Activated CD4-positive, alpha-beta T cell treated with anti-CD3 and anti-CD28 coated beads for 36 hours (primary cell): ENCODE measurements at regions of chr2 and their contacts with region 1.

Region 1: GRCh38 chr2:85538486-85539360 is at the start of gene MAT2A:
- DNase-seq: peak; percentile 93
- ATAC-seq: peak; percentile 79
- H3K4me3 Mint-ChIP-seq: peak within 1 kb of the TSS; percentile 95
- H3K27ac Mint-ChIP-seq: peak within 1 kb of the TSS; percentile 99
- H3K4me1 Mint-ChIP-seq: peaks cover 43% of the 10 kb centered on the region
- H3K27me3 Mint-ChIP-seq: no peaks in the 10 kb centered on the region
- total RNA-seq, gene MAT2A: 226 to 259 TPM

Region 2: DNA sequence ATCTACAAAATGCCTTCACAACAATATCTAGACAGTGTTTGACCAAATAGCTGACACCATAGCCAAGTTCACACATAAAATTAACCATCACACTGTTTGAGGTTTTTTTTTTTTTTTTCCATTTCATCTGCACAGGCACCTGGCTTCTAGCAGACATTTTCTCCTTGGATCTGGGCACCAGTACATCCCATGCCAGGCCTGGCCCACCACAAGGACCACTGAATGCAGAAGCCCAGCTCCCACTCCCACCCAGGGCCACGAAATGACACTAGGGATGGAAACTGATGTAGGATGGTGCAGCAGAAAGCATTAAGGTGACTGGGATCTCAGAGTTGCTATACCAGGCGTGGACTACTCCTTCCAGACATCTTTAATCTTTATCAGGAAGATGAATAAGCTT is 620.3 kb before region 1 on chr2:
- CTCF ChIA-PET with region 1: no interaction called
- POLR2A ChIA-PET with region 1: no interaction called
- intact Hi-C with region 1: no loop called
- DNase-seq: no peak
- ATAC-seq: no peak
- H3K4me3 Mint-ChIP-seq: no peak overlapping the region
- H3K27ac Mint-ChIP-seq: peak overlapping the region; percentile 56
- H3K4me1 Mint-ChIP-seq: peaks cover 31% of the 10 kb centered on the region
- H3K27me3 Mint-ChIP-seq: no peaks in the 10 kb centered on the region

Region 3: DNA sequence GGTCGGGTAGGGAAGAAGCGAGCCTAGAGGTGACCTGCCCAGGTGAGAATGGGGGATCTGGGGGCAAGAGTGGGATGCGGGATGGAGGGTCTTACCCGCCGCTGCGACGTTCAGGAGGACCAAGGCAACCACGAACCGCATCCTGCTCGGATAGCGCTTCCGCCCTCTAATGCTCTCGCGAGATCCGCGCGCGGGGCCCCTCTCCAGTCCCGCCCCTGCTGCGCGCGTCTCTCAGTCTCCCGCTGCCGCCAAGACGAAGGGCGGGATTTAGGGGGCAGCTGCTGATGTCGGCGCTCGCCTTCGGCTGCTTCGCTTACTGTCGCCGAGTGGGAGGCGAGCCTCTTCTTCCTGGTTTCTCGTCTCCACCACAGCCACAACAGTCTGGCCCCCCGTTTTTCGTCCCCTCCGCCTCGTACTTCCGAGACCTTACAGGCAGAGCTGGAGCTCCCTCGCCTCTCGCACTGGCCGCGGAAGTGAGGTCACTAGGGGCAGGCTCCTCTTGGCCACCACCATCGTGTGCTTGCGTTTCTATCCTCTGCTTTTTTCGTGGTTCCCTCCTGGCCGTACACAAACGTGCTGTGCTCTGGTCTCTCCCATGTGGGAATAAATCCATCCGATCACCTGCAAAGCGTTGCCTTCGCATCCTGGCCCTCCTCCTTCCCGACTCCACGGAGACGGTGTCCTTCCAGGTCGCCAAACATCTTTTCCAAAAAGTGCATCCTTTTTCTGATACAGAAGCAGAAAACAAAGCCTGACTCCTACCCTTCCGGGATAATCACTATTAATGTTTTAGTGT is 210.7 kb before region 1 on chr2 and contains the start of gene TGOLN2:
- CTCF ChIA-PET with region 1: interaction called, 4 read pairs
- POLR2A ChIA-PET with region 1: interaction called, 12 read pairs
- intact Hi-C with region 1: loop called (anchors 1 to 5 kb)
- DNase-seq: peak; percentile 98
- ATAC-seq: peak; percentile 91
- H3K4me3 Mint-ChIP-seq: peak within 1 kb of the TSS; percentile 86
- H3K27ac Mint-ChIP-seq: peak within 1 kb of the TSS; percentile 99
- H3K4me1 Mint-ChIP-seq: peaks cover 37% of the 10 kb centered on the region
- H3K27me3 Mint-ChIP-seq: no peaks in the 10 kb centered on the region
- total RNA-seq, gene TGOLN2: 84.0 to 90.4 TPM

Region 4: GRCh38 chr2:85437488-85438284 is 101.0 kb before region 1 on chr2:
- CTCF ChIA-PET with region 1: interaction called, 5 read pairs
- POLR2A ChIA-PET with region 1: interaction called, 16 read pairs
- intact Hi-C with region 1: loop called (anchors 1 to 2 kb)
- DNase-seq: peak; percentile 87
- ATAC-seq: peak; percentile 84
- H3K4me3 Mint-ChIP-seq: peak overlapping the region; percentile 73
- H3K27ac Mint-ChIP-seq: peak overlapping the region; percentile 93
- H3K4me1 Mint-ChIP-seq: peaks cover 28% of the 10 kb centered on the region
- H3K27me3 Mint-ChIP-seq: no peaks in the 10 kb centered on the region

Region 5: GRCh38 chr2:85584857-85585783 is 46.4 kb after region 1 on chr2:
- CTCF ChIA-PET with region 1: interaction called, 3 read pairs
- POLR2A ChIA-PET with region 1: interaction called, 11 read pairs
- intact Hi-C with region 1: no loop called
- DNase-seq: peak; percentile 52
- ATAC-seq: peak; percentile 79
- H3K4me3 Mint-ChIP-seq: peak overlapping the region; percentile 75
- H3K27ac Mint-ChIP-seq: peak overlapping the region; percentile 87
- H3K4me1 Mint-ChIP-seq: peaks cover 34% of the 10 kb centered on the region
- H3K27me3 Mint-ChIP-seq: no peaks in the 10 kb centered on the region

Region 6: DNA sequence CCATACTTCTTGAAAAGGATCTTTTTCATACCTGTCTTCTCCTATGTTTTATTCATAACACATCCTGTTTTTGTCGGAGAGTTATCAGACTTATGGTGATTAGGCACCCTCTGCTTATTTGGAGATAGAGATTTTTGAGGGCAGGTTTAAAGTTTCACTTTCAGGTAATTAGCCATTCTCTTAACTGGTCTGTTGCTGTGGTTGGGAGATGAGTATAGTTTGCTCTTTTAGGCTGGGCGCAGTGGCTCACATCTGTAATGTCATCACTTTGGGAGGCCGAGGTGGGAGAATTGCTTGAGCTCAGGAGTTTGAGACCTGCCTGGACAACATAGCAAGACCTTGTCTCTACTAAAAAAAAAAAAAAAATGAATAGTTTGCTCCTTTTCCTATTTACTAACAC is 104.0 kb after region 1 on chr2:
- CTCF ChIA-PET with region 1: no interaction called
- POLR2A ChIA-PET with region 1: no interaction called
- intact Hi-C with region 1: no loop called
- DNase-seq: peak; percentile 30
- ATAC-seq: peak; percentile 82
- H3K4me3 Mint-ChIP-seq: no peak overlapping the region
- H3K27ac Mint-ChIP-seq: peak overlapping the region; percentile 27
- H3K4me1 Mint-ChIP-seq: peaks cover 14% of the 10 kb centered on the region
- H3K27me3 Mint-ChIP-seq: no peaks in the 10 kb centered on the region

Region 7: GRCh38 chr2:85718009-85718391 is 179.3 kb after region 1 on chr2:
- CTCF ChIA-PET with region 1: no interaction called
- POLR2A ChIA-PET with region 1: no interaction called
- intact Hi-C with region 1: no loop called
- DNase-seq: no peak
- ATAC-seq: no peak
- H3K4me3 Mint-ChIP-seq: no peak overlapping the region
- H3K27ac Mint-ChIP-seq: no peak overlapping the region
- H3K4me1 Mint-ChIP-seq: peaks cover 3% of the 10 kb centered on the region
- H3K27me3 Mint-ChIP-seq: no peaks in the 10 kb centered on the region

Region 8: GRCh38 chr2:86195055-86195807 is 656.5 kb after region 1 on chr2 and contains the start of gene IMMT:
- CTCF ChIA-PET with region 1: no interaction called
- POLR2A ChIA-PET with region 1: no interaction called
- intact Hi-C with region 1: loop called in 1 of 2 experiments (anchors 2 kb)
- DNase-seq: peak; percentile 97
- ATAC-seq: peak; percentile 93
- H3K4me3 Mint-ChIP-seq: peak within 1 kb of the TSS; percentile 81
- H3K27ac Mint-ChIP-seq: peak within 1 kb of the TSS; percentile 92
- H3K4me1 Mint-ChIP-seq: peaks cover 44% of the 10 kb centered on the region
- H3K27me3 Mint-ChIP-seq: no peaks in the 10 kb centered on the region
- total RNA-seq, gene IMMT: 172 to 182 TPM